ENCODE measurements at regions of chr20 and their contacts with region 1.

Region 1: DNA sequence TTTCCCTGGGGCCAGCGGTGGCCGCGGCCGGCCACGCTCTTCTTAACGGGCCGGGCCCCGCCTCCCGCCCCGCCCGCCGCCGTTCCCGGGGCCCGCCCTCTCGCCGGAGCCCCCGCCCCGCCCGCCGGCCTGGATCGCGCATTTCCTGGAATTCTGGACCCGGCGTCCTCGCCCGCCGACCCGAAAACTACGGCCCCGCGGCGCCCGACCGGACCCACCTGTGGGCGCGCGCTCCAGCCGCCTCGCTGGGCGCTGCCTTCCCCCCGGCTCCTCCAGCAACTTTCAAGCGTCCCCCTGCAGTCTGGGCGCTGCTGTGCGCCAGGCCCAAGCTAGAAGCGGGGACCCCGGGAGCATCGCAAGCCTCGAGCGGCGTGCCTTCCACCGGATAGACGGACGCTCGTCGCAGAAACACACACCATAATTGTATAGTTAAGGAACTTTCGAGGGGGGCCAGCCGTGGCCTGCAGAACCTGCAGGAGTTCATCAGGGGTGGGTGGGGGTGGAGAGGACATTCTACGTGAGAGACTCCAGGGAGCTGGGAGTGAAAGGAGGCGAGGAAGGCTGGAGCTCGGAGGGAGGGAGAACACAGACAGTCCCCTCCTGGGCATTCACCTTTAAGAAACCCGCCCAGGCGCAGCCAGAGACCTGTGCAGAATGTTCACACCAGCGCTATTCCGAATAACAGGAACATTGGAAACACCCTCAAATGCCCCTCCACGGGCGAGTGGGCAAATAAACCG is at the start of gene ADA:
- DNase-seq: peak in 12 of 14 experiments; percentile 20 to 70 (median 41)
- ATAC-seq: peak; percentile 56
- H3K4me3 ChIP-seq: peak within 1 kb of the TSS; percentile 93
- H3K4me3 Mint-ChIP-seq: peak within 1 kb of the TSS; percentile 90
- H3K27ac ChIP-seq: peak within 1 kb of the TSS; percentile 66 to 69
- H3K27ac Mint-ChIP-seq: peak within 1 kb of the TSS; percentile 91
- H3K4me1 ChIP-seq: peaks cover 55% of the 10 kb centered on the region
- H3K4me1 Mint-ChIP-seq: peaks cover 47% of the 10 kb centered on the region
- H3K27me3 ChIP-seq: no peaks in the 10 kb centered on the region
- H3K27me3 Mint-ChIP-seq: no peaks in the 10 kb centered on the region
- CTCF ChIP-seq: no peak
- total RNA-seq, gene ADA: 31.7 to 32.8 TPM

Region 2: GRCh38 chr20:44521484-44522481 is 130.1 kb before region 1 on chr20 and contains the start of gene SERINC3:
- CTCF ChIA-PET with region 1: no interaction called
- POLR2A ChIA-PET with region 1: interaction called, 7 read pairs
- intact Hi-C with region 1: loop called in 1 of 2 experiments (anchors 5 kb)
- DNase-seq: peak; percentile 90 to 99 (median 97)
- ATAC-seq: peak; percentile 93
- H3K4me3 ChIP-seq: peak within 1 kb of the TSS; percentile 98
- H3K4me3 Mint-ChIP-seq: peak within 1 kb of the TSS; percentile 89
- H3K27ac ChIP-seq: peak within 1 kb of the TSS; percentile 95 to 99
- H3K27ac Mint-ChIP-seq: peak within 1 kb of the TSS; percentile 93
- H3K4me1 ChIP-seq: peaks cover 44% of the 10 kb centered on the region
- H3K4me1 Mint-ChIP-seq: peaks cover 58% of the 10 kb centered on the region
- H3K27me3 ChIP-seq: no peaks in the 10 kb centered on the region
- H3K27me3 Mint-ChIP-seq: no peaks in the 10 kb centered on the region
- CTCF ChIP-seq: peak; percentile 46
- total RNA-seq, gene SERINC3: 39.5 to 40.2 TPM

Region 3: DNA sequence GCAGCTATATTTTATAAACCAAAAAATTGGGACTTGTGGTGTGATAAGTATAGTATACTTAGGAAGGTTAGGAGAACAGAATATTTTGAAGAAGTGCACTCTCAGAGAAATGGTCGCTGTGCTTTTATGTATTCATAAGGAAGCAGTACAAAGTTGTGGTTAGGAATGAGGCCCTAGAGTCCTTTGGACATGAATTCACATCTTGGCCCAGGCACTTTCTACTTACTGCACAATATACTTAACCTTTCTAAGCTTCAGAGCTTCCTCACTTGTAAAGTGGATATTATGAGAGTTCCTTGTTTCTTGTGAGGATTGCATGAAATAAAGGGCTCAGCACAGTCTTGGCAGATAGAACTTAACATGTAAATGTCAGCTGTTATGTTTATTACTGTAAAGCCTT is 109.0 kb before region 1 on chr20:
- CTCF ChIA-PET with region 1: no interaction called
- POLR2A ChIA-PET with region 1: no interaction called
- intact Hi-C with region 1: no loop called
- DNase-seq: no peak
- ATAC-seq: no peak
- H3K4me3 ChIP-seq: no peak overlapping the region
- H3K4me3 Mint-ChIP-seq: no peak overlapping the region
- H3K27ac ChIP-seq: no peak overlapping the region
- H3K27ac Mint-ChIP-seq: no peak overlapping the region
- H3K4me1 ChIP-seq: no peaks in the 10 kb centered on the region
- H3K4me1 Mint-ChIP-seq: no peaks in the 10 kb centered on the region
- H3K27me3 ChIP-seq: no peaks in the 10 kb centered on the region
- H3K27me3 Mint-ChIP-seq: no peaks in the 10 kb centered on the region
- CTCF ChIP-seq: no peak

Region 4: DNA sequence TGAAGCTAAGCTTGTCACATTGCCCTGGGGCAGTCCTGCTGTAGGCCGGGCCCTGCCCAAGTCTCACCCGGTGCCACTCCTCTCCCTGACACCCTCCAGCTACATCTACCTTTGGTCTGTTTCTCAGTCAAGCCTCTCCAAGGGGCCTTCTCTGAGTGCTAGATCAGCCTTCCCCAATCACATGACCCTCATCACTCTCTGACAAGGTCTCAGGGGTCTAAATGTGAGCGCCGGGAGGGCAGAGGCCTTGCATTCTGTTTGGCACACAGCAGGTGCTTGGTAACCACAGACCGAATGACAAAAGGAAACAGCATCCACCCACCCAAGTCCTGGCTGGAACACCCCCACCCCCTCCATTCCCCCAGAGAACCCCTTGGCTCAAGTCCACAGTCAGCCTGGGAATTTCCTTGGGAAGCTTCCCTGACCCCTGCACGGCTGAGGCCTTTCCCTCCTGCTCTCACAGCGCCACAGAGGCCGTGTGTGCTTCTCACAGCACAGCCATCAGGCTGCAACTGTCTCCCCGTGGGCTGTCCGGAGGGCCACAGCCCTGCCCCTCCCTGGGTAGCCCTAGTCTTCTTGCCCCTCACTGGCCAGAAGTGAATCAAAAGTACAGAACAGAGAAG is 36.6 kb before region 1 on chr20:
- CTCF ChIA-PET with region 1: interaction called, 5 read pairs
- POLR2A ChIA-PET with region 1: interaction called, 27 read pairs
- intact Hi-C with region 1: loop called (anchors 2 to 5 kb)
- DNase-seq: peak in 3 of 14 experiments; percentile 8 to 33 (median 27)
- ATAC-seq: no peak
- H3K4me3 ChIP-seq: no peak overlapping the region
- H3K4me3 Mint-ChIP-seq: peak overlapping the region; percentile 69
- H3K27ac ChIP-seq: peak overlapping the region; percentile 11 to 29
- H3K27ac Mint-ChIP-seq: peak overlapping the region; percentile 98
- H3K4me1 ChIP-seq: peaks cover 66% of the 10 kb centered on the region
- H3K4me1 Mint-ChIP-seq: peaks cover 83% of the 10 kb centered on the region
- H3K27me3 ChIP-seq: no peaks in the 10 kb centered on the region
- H3K27me3 Mint-ChIP-seq: no peaks in the 10 kb centered on the region
- CTCF ChIP-seq: no peak

Region 5: DNA sequence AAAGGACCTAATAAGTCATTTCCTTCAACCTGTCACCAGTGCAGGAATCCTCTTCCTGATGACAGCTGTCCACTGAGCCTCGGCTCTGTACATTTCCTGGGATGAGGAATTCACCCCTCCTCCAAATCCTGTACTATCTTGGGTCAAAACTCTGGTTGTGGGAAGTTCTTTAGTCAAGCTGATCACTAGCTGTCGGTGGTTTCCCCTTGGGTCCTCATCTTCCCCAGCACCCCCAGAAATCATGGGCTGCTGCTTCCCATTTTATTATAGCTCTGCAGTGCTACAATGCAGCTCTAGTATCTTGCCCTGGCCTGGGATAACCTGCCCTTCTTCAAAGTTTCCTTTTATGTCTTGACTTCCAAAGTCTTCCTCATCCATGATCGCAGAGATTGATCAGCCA is 14.2 kb after region 1 on chr20:
- CTCF ChIA-PET with region 1: no interaction called
- POLR2A ChIA-PET with region 1: interaction called, 11 read pairs
- intact Hi-C with region 1: loop called in 1 of 2 experiments (anchors 2 kb)
- DNase-seq: no peak
- ATAC-seq: no peak
- H3K4me3 ChIP-seq: no peak overlapping the region
- H3K4me3 Mint-ChIP-seq: no peak overlapping the region
- H3K27ac ChIP-seq: no peak overlapping the region
- H3K27ac Mint-ChIP-seq: no peak overlapping the region
- H3K4me1 ChIP-seq: peaks cover 12% of the 10 kb centered on the region
- H3K4me1 Mint-ChIP-seq: peaks cover 10% of the 10 kb centered on the region
- H3K27me3 ChIP-seq: no peaks in the 10 kb centered on the region
- H3K27me3 Mint-ChIP-seq: no peaks in the 10 kb centered on the region
- CTCF ChIP-seq: no peak